ENCODE measurements at regions of chr18 and their contacts with region 1.

Region 1: GRCh38 chr18:26548429-26549262 is at the start of gene KCTD1:
- DNase-seq: peak; percentile 72
- H3K4me3 Mint-ChIP-seq: peak within 1 kb of the TSS; percentile 88
- H3K27ac Mint-ChIP-seq: peak within 1 kb of the TSS; percentile 77
- H3K4me1 Mint-ChIP-seq: peaks cover 18% of the 10 kb centered on the region
- H3K27me3 Mint-ChIP-seq: peaks cover 34% of the 10 kb centered on the region
- total RNA-seq, gene KCTD1: 6.4 and 6.8 TPM in 2 replicates

Region 2: DNA sequence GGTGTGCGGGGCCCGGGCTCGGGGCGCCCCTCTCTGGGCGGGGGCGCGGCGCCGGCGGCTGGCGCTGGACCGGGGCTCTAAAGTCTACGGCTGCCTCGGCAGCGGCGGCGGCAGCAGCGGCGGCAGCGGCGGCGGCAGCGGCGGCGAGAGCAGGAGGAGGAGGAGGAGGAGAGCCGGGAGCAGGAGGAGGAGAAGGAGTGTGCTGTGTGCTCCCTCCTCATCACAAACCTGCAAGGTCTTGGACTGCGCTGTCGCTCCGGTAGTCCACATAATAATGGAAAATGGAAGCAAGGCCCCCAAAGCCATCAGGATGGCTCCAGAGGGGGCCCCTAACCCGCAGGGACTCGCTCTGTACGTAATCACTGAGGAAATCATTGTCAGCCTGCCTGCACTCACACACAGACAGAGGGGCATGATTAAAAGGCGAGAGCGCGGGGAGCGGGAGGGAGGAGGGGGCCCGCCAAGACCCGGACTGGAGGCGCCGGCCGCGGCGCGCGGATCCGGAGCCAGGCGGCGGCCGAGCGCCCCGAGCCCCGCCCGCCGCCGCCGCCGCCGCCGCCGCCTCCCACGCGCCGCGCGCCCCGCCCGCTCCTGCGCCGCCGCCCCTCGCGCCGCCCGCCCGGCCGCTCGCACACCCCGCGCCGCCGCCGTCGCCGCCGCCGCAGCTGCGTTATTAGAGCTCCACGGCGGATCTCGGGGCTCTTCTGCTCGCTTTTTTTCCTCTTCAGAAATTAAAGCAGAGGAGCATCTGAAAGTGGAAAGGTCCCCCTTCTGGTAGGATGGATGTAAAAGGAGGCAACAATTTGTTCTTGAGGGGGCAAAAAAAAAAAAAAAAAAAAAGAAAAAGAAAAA is 1196.6 kb before region 1 on chr18 and contains the start of gene ZNF521:
- intact Hi-C with region 1: loop called (anchors 10 kb)
- DNase-seq: peak; percentile 24
- H3K4me3 Mint-ChIP-seq: peak within 1 kb of the TSS; percentile 71
- H3K27ac Mint-ChIP-seq: no peak within 1 kb of the TSS
- H3K4me1 Mint-ChIP-seq: peaks cover 11% of the 10 kb centered on the region
- H3K27me3 Mint-ChIP-seq: peaks cover 63% of the 10 kb centered on the region
- total RNA-seq, gene ZNF521: not detected in 2 replicates

Region 3: GRCh38 chr18:26090130-26091046 is 458.3 kb before region 1 on chr18 and contains the start of gene SS18:
- intact Hi-C with region 1: loop called (anchors 10 kb)
- DNase-seq: peak; percentile 88
- H3K4me3 Mint-ChIP-seq: peak within 1 kb of the TSS; percentile 89
- H3K27ac Mint-ChIP-seq: peak within 1 kb of the TSS; percentile 97
- H3K4me1 Mint-ChIP-seq: peaks cover 26% of the 10 kb centered on the region
- H3K27me3 Mint-ChIP-seq: peaks cover 2% of the 10 kb centered on the region
- total RNA-seq, gene SS18: 75.2 TPM in 2 replicates

Region 4: GRCh38 chr18:26383454-26384270 is 165.0 kb before region 1 on chr18:
- intact Hi-C with region 1: loop called (anchors 2 kb)
- DNase-seq: no peak
- H3K4me3 Mint-ChIP-seq: no peak overlapping the region
- H3K27ac Mint-ChIP-seq: no peak overlapping the region
- H3K4me1 Mint-ChIP-seq: no peaks in the 10 kb centered on the region
- H3K27me3 Mint-ChIP-seq: no peaks in the 10 kb centered on the region

Region 5: GRCh38 chr18:26458526-26459232 is 90.0 kb before region 1 on chr18:
- intact Hi-C with region 1: loop called (anchors 5 kb)
- DNase-seq: no peak
- H3K4me3 Mint-ChIP-seq: no peak overlapping the region
- H3K27ac Mint-ChIP-seq: peak overlapping the region; percentile 7
- H3K4me1 Mint-ChIP-seq: peaks cover 18% of the 10 kb centered on the region
- H3K27me3 Mint-ChIP-seq: no peaks in the 10 kb centered on the region

Region 6: DNA sequence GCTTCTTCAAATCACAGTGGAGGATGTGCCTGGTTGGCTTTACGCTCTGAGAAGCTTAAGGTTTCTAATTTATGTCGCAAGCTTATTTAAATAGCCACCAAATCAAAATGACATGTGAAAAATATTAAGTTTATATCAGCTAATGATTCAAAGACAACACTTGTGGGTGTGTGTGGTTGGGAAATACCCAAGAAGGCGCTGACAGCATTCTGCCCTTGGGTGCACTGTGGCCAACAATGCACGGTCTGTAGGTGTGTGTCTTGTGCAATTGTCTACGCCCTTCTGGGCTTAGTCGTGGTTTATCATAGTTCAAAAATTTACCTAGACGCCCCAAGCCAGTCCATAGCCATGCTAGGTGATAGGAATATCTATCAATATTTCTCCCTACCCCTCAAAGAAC is 61.2 kb before region 1 on chr18:
- intact Hi-C with region 1: no loop called
- DNase-seq: no peak
- H3K4me3 Mint-ChIP-seq: no peak overlapping the region
- H3K27ac Mint-ChIP-seq: no peak overlapping the region
- H3K4me1 Mint-ChIP-seq: peaks cover 7% of the 10 kb centered on the region
- H3K27me3 Mint-ChIP-seq: no peaks in the 10 kb centered on the region

Region 7: GRCh38 chr18:26656944-26657536 is 108.4 kb after region 1 on chr18:
- intact Hi-C with region 1: loop called (anchors 1 kb)
- DNase-seq: no peak
- H3K4me3 Mint-ChIP-seq: peak overlapping the region; percentile 80
- H3K27ac Mint-ChIP-seq: peak overlapping the region; percentile 3
- H3K4me1 Mint-ChIP-seq: peaks cover 13% of the 10 kb centered on the region
- H3K27me3 Mint-ChIP-seq: peaks cover 71% of the 10 kb centered on the region